ENCODE measurements at regions of chr1 and their contacts with region 1.

Region 1: GRCh38 chr1:89483010-89483756 is 41.4 kb upstream of the LRRC8B start:
- DNase-seq: peak; percentile 59 to 68
- ATAC-seq: peak; percentile 73 to 93 (median 83)
- H3K4me3 ChIP-seq: no peak overlapping the region
- H3K27ac ChIP-seq: no peak overlapping the region
- H3K4me1 ChIP-seq: no peaks in the 10 kb centered on the region
- H3K27me3 ChIP-seq: no peaks in the 10 kb centered on the region
- CTCF ChIP-seq: peak; percentile 83

Region 2: GRCh38 chr1:89598450-89599331 is 115.5 kb after region 1 on chr1:
- intact Hi-C with region 1: loop called (anchors 2 kb)
- DNase-seq: no peak
- ATAC-seq: peak; percentile 55 to 86 (median 67)
- H3K4me3 ChIP-seq: no peak overlapping the region
- H3K27ac ChIP-seq: no peak overlapping the region
- H3K4me1 ChIP-seq: no peaks in the 10 kb centered on the region
- H3K27me3 ChIP-seq: no peaks in the 10 kb centered on the region
- CTCF ChIP-seq: peak; percentile 73

Region 3: DNA sequence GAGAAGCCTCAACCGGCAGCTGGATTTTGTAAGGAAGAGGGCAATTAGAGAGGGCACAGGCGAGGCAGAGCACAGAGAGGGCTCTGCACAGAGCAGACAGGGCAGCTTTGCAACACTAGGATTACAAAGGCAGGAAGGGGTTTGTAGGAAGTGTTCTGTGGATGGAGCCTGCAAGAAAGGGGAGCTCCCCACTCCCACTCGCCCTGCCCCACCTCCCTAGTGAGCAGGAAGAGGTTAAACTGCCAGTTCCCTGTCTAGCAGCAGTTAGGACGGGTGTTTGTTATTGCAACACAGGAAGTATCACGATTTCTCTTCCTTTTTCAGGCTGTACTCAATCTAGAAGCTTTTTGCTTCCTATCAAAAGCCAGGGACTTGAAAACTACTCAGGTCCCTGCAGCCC is 274.3 kb after region 1 on chr1:
- intact Hi-C with region 1: loop called in 1 of 2 experiments (anchors 5 kb)
- DNase-seq: peak in 1 of 2 donors; percentile 39
- ATAC-seq: peak in 3 of 4 donors; percentile 31 to 64 (median 52)
- H3K4me3 ChIP-seq: no peak overlapping the region
- H3K27ac ChIP-seq: peak overlapping the region; percentile 1
- H3K4me1 ChIP-seq: no peaks in the 10 kb centered on the region
- H3K27me3 ChIP-seq: no peaks in the 10 kb centered on the region
- CTCF ChIP-seq: no peak

Region 4: DNA sequence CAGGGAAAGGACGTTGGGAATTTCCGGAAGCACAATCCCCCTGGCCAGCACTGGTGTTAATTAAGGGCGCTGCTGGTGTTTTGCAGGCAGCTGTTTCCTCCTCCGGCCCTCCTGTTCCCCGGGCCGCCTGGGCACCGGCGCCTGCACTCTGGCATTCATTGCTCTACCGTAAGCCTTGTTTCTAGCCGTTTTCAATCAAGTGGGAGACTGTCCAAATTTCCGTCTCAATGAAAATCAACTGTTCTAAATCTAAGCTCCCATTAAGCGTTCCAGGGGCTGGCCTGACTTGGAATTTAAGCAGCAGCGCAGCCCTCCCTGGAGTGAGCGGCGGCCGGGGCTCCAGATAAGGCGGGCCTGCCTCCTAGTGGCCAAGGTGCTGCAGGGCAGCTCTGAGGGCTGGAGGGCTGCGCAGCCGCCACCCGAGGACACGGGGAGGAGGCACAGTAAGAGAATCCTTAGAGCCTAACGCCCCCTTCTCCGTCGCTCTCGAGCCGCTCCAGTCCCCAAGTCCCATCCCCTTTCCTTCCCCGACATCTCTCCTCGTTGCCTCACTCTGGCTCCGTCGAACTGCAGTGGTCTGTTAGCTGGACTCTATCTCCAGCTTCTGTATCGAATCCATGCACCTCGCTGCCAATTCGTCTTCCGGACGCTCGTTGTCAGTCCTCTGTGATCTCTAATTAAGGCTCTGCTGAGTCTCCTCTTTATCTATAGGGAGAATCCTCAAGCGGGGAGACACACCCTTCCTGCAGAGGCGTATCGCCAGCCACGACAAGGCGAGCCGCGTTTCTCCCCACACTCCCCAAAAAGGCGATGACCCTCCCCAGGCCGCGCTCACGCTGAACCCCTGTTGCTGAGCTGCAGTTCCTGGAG is 279.8 kb after region 1 on chr1:
- intact Hi-C with region 1: loop called (anchors 1 to 5 kb)
- DNase-seq: peak; percentile 84 to 91
- ATAC-seq: peak; percentile 98 to 100 (median 98)
- H3K4me3 ChIP-seq: peak overlapping the region; percentile 63
- H3K27ac ChIP-seq: peak overlapping the region; percentile 18
- H3K4me1 ChIP-seq: no peaks in the 10 kb centered on the region
- H3K27me3 ChIP-seq: no peaks in the 10 kb centered on the region
- CTCF ChIP-seq: peak; percentile 98

Region 5: DNA sequence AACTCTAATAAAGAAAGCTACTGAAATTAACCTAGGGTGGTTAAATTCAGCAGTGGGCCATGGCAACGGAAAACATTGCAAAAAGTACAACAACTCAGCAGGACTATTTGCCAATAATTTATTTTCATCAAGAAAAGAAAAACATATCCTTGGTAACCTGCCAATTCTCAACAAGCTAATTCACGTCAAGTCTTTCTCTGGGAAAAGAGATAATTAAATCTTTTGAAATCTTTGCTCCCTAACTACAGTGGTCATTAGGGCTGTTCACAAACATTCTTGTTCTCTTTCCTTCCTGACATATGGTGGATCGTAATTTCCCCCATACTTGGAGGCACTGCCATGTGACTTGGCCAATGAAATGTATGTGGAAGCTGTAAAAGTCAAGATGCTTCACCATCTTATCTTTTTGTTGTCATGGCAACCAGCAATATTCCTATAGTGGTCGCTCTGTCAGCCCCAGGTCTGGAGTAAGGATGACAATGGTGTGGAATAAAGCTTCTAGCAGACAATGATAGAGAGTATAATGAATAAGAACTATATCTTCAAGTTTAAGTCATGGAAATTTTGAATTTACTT is 482.1 kb after region 1 on chr1:
- intact Hi-C with region 1: loop called in 1 of 2 experiments (anchors 5 kb)
- DNase-seq: no peak
- ATAC-seq: no peak
- H3K4me3 ChIP-seq: no peak overlapping the region
- H3K27ac ChIP-seq: no peak overlapping the region
- H3K4me1 ChIP-seq: no peaks in the 10 kb centered on the region
- H3K27me3 ChIP-seq: no peaks in the 10 kb centered on the region
- CTCF ChIP-seq: no peak

Measured in psoas muscle (tissue), 8 donors.